Astrocyte of the cerebellum (primary cell): ENCODE measurements at regions of chr14 and their contacts with region 1.

Region 1: DNA sequence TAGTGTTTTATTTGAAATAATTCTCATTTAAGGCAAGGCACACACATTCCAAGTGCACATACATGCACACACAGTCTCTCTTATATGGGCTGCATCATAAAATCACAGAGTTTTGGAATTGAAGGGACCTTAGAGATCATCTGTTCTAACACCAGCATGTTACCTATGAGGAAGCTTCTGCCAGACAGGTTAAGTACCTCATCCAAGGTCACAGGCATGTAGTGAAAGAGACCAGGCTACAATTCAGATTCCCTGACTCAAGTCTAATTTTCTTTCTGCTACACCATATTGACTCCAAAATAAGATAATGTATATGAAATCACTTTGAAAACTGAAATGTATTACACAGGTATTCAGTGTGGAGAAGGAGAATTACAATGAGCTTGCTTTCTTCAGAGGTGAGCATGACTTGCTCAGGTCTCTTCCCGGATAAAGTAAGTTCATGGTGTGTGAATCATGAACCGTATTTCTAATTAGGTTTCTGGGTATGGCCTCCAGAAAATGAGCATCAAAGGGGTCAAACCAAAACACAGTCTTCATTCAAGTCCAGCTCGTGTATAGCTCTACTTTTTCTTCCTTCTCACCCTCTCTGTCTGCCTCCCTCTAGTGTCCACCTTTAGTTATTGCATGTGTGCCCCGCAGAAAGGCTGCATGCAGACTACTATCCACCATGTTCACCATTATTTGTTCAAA is 411.9 kb downstream of the FUT8 start:
- DNase-seq: peak; percentile 49
- H3K4me3 ChIP-seq: no peak overlapping the region
- CTCF ChIP-seq: peak; percentile 96

Region 2: GRCh38 chr14:65169351-65169750 is 655.1 kb before region 1 on chr14:
- in situ Hi-C with region 1: loop called (anchors 5 kb)
- DNase-seq: no peak
- H3K4me3 ChIP-seq: no peak overlapping the region
- CTCF ChIP-seq: no peak

Region 3: DNA sequence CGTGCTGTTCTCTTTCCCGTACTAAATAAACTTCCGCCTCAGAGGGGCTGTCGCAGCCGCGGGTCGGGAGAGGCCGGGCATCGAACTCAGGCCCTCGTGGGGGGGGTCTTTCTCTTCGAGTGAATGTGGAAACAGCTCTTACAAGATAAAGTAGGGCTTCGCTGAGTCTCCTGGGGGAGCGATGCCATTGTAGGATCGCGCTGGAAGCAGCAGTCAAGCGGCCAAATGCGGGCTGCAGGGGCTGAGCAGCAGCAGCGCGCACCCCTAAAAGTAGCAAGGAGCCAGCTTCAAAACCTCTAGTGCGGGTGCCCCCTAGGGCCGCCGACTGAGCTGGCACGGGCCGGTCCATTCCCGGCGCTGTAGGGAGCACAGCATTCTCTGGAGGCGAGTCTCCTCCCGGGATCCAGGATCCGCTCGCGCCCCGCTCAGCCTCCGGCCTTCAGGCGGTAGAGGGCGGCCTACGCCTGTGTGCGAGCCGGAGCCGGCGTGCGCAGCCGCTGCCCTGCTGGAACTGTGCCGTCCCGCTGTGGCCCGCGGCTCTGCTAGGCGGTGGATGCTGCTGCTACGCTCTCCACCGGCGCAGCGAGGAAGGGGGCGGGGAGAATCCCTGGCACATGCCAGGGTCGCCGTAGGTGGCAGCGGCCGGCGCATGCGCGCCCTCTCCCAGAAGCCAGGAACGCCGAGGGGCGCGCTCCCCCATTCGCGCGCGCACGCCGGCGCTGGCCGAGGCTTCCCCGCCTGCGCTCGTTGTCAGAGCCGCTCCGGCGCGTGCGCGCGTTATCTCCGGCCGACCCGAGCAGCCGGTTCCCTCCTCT is 412.2 kb before region 1 on chr14 and contains the start of gene FUT8:
- in situ Hi-C with region 1: loop called (anchors 5 kb)
- DNase-seq: peak; percentile 93
- H3K4me3 ChIP-seq: peak within 1 kb of the TSS; percentile 91
- CTCF ChIP-seq: peak; percentile 72

Region 4: GRCh38 chr14:65486868-65487267 is 337.6 kb before region 1 on chr14:
- in situ Hi-C with region 1: loop called (anchors 5 kb)
- DNase-seq: no peak
- H3K4me3 ChIP-seq: no peak overlapping the region
- CTCF ChIP-seq: no peak

Region 5: DNA sequence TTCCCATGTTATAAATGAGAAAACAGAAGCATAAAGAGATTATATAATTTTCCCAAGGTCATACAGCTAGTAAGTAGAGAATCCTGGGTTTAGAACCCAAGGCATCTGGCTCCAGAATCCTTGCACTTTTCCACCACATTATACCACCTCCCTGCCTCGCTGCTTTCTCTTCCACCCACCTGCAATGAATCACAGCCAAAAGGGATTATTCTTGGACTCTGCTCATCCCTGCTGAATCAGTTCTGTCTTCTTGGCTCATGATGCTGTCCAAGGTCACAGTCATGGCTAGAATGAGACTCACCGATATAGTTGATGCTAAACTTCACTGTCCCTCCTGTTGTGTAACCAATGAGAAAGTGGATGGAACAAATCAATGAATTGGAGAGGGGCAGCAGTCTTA is 55.3 kb before region 1 on chr14:
- in situ Hi-C with region 1: loop called (anchors 5 kb)
- DNase-seq: no peak
- H3K4me3 ChIP-seq: no peak overlapping the region
- CTCF ChIP-seq: no peak

Region 6: DNA sequence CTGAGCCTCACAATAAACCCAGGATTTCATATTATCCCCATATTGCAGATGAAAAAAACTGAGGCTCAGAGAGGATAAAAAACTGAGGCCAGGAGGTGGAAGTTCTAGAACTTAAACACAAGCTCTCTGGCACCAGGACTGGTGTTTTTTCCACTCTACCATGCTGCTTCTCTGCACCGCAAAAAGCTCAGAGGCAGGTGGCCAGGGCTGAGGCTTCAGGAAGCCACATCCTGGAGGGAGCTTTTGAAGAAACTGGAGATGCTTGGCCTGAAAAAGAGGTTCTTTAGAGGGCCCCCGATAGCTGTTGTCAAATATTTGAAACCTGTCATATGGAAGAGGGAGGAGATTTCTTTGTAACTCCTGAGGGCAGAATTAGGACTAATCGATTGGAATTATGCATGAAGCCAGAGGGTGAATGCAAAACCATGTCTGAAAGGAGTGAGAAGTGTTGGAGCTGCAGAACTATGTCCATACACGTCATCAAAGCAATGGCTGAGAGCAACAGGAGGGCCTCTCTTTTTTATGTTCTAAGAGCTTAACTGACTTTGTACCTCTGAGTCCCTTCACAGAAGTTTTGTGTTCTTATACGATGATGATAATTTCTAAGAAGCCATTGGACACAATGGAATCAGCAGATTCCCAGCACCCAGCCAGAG is 36.7 kb after region 1 on chr14:
- in situ Hi-C with region 1: no loop called
- DNase-seq: no peak
- H3K4me3 ChIP-seq: no peak overlapping the region
- CTCF ChIP-seq: no peak